CD8-positive, alpha-beta T cell (primary cell): ENCODE measurements at regions of chr3 and their contacts with region 1.

Region 1: DNA sequence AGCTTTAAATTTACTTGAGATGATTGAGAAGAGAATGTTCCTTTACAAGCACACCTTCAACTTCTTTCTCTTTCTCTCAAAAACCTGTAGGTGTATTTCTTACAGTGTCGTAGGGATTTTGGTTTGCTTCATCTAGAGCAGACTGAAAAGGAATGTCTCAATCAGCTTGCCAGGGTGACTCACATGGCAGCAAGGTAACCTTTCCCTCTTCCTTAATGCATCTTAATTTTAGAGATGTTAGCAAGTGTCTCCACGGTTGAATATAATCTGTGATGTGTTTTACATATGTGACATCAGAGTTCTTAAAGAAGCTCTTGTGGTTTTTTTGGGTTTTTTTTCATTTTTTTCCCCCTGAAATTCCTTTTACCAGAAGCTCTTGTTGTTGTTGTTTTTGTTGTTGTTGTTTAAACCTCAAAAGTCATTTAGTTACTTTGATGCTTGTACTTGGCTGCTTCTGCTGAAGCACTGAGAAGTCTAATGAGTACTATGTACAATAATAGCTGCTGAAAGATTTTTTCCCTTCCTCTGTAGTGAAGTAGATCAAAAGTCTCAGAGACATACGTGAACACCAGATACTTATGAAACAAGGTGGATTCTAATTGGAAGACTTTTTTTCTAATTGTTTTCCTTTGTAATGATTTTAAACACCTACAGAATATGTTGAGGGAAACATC is 83.1 kb downstream of the RETNLB start:
- DNase-seq: no peak
- ATAC-seq: no peak
- H3K4me3 ChIP-seq: no peak overlapping the region
- H3K4me3 Mint-ChIP-seq: no peak overlapping the region
- H3K27ac ChIP-seq: no peak overlapping the region
- H3K27ac Mint-ChIP-seq: no peak overlapping the region
- H3K4me1 ChIP-seq: no peaks in the 10 kb centered on the region
- H3K4me1 Mint-ChIP-seq: peaks cover 2% of the 10 kb centered on the region
- H3K27me3 ChIP-seq: no peaks in the 10 kb centered on the region
- H3K27me3 Mint-ChIP-seq: no peaks in the 10 kb centered on the region
- CTCF ChIP-seq: no peak

Region 2: DNA sequence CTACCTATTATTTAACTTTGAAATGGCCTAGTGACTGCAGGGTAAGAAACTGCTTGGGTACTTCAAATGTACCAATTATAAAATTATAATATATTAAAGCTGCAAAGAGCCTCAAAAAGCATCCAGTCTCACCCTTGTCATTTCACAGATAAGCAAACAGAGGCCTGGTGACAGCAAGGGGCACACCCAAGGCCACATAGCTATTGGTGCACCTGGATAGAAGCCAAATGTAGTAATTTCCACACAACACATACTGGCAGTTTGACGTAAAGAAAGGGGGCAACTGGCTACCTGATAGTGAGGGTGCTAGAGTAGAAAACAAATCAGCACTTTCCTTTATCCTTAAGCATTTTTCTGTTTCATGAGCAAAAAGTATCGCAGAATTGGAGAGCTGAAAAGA is 503.0 kb before region 1 on chr3:
- CTCF ChIA-PET with region 1: no interaction called
- POLR2A ChIA-PET with region 1: no interaction called
- intact Hi-C with region 1: no loop called
- DNase-seq: no peak
- ATAC-seq: no peak
- H3K4me3 ChIP-seq: no peak overlapping the region
- H3K4me3 Mint-ChIP-seq: no peak overlapping the region
- H3K27ac ChIP-seq: no peak overlapping the region
- H3K27ac Mint-ChIP-seq: no peak overlapping the region
- H3K4me1 ChIP-seq: no peaks in the 10 kb centered on the region
- H3K4me1 Mint-ChIP-seq: peaks cover 14% of the 10 kb centered on the region
- H3K27me3 ChIP-seq: no peaks in the 10 kb centered on the region
- H3K27me3 Mint-ChIP-seq: no peaks in the 10 kb centered on the region
- CTCF ChIP-seq: no peak

Region 3: GRCh38 chr3:108359011-108359410 is 315.1 kb before region 1 on chr3:
- CTCF ChIA-PET with region 1: no interaction called
- POLR2A ChIA-PET with region 1: no interaction called
- intact Hi-C with region 1: no loop called
- DNase-seq: no peak
- ATAC-seq: no peak
- H3K4me3 ChIP-seq: no peak overlapping the region
- H3K4me3 Mint-ChIP-seq: no peak overlapping the region
- H3K27ac ChIP-seq: no peak overlapping the region
- H3K27ac Mint-ChIP-seq: no peak overlapping the region
- H3K4me1 ChIP-seq: no peaks in the 10 kb centered on the region
- H3K4me1 Mint-ChIP-seq: no peaks in the 10 kb centered on the region
- H3K27me3 ChIP-seq: no peaks in the 10 kb centered on the region
- H3K27me3 Mint-ChIP-seq: no peaks in the 10 kb centered on the region
- CTCF ChIP-seq: no peak

Region 4: GRCh38 chr3:108662130-108662738 is 11.9 kb before region 1 on chr3:
- CTCF ChIA-PET with region 1: interaction called, 19 read pairs
- POLR2A ChIA-PET with region 1: interaction called, 4 read pairs
- intact Hi-C with region 1: no loop called
- DNase-seq: peak in 7 of 9 experiments; percentile 12 to 85 (median 33)
- ATAC-seq: peak; percentile 84
- H3K4me3 ChIP-seq: no peak overlapping the region
- H3K4me3 Mint-ChIP-seq: no peak overlapping the region
- H3K27ac ChIP-seq: no peak overlapping the region
- H3K27ac Mint-ChIP-seq: no peak overlapping the region
- H3K4me1 ChIP-seq: no peaks in the 10 kb centered on the region
- H3K4me1 Mint-ChIP-seq: peaks cover 10% of the 10 kb centered on the region
- H3K27me3 ChIP-seq: no peaks in the 10 kb centered on the region
- H3K27me3 Mint-ChIP-seq: no peaks in the 10 kb centered on the region
- CTCF ChIP-seq: peak; percentile 83

Region 5: DNA sequence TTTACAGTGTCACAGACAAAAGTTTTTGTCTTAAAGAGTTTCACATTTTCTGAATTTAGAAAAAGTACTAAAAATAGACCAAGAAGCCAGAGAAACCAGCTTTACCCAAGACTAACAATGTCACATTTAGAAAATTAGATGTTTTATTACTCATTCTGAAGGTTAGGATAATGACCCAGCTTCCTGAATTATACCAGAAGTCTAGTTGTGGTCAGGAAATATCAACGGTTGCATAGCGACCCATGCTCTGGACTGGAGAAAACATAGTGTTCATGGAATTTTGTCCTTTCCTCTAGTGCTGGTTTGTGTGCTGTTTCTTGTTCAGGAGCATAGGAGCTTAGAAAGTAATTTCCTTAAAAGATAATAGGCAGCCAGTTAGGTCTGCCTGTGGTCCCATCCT is 583.1 kb after region 1 on chr3:
- CTCF ChIA-PET with region 1: no interaction called
- POLR2A ChIA-PET with region 1: no interaction called
- intact Hi-C with region 1: no loop called
- DNase-seq: no peak
- ATAC-seq: no peak
- H3K4me3 ChIP-seq: no peak overlapping the region
- H3K4me3 Mint-ChIP-seq: no peak overlapping the region
- H3K27ac ChIP-seq: no peak overlapping the region
- H3K27ac Mint-ChIP-seq: no peak overlapping the region
- H3K4me1 ChIP-seq: no peaks in the 10 kb centered on the region
- H3K4me1 Mint-ChIP-seq: no peaks in the 10 kb centered on the region
- H3K27me3 ChIP-seq: no peaks in the 10 kb centered on the region
- H3K27me3 Mint-ChIP-seq: peaks cover 2% of the 10 kb centered on the region
- CTCF ChIP-seq: no peak